ENCODE measurements at regions of chr5 and their contacts with region 1.

Region 1: DNA sequence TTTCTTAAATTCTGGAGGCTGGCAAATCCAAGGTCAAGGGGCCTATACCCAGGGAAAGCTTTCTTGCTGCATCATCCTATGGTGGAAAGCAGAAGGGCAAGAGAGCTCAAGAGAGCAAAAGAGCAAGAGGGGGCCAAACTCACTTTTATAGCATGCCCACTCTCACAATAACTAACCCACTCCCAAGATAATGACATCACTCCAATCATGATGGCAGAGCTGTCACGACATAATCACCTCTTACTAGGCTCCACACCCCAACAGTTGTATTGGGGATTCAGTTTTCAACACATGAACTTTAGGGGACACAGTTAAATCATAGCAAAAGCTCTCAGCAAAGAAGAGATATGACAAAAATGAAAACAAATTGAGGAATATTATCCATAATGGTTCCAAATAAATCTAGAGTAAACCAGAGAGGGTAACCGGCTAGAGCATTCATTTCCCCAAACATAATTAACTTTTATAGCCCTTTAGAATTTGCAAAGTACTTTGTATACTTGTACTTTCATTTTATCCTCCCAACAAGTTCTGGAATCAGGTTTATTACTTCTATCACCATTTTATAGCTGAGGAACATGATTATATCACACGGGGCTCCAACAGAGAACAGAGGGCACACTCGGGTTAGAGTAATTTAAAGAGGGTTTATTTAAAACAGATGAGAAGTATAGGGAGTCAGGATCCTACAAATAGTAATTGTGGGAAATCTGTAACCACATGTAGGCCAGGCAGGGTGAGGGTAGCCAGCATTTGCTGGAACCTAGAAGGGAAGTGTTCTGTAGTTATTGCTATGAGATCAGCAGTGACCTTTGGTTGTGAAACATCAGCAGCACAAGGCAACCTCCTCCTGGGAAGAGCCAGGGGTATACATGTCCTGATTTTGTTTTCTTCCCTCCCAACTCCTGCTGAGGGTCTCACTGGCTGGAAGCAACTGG is 7.2 kb upstream of the TARS1 start:
- DNase-seq: no peak
- H3K4me3 ChIP-seq: no peak overlapping the region
- H3K27ac ChIP-seq: no peak overlapping the region
- H3K4me1 ChIP-seq: no peaks in the 10 kb centered on the region
- H3K27me3 ChIP-seq: no peaks in the 10 kb centered on the region

Region 2: DNA sequence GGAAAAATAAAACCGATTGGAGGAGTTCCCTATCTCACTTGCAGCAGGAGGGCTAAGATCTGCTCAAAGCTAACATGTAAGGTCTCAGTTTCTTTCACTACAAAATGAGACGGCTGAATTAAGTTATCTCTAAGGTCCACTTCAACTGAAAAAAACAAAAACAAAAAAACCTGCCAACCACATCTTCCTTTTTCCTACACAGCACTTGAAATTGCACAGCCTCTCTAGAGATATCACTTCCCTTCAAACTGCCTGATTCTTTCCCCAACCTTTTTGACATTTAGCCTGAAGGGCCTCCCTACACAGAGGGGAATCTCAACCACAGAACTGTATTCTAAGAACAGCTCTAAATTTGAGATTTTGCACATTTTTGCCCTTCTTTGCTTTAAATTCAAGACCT is 220.7 kb before region 1 on chr5:
- CTCF ChIA-PET with region 1: no interaction called
- POLR2A ChIA-PET with region 1: no interaction called
- DNase-seq: peak; percentile 47 to 85 (median 73)
- H3K4me3 ChIP-seq: peak overlapping the region in 2 of 7 experiments; percentile 31 to 45
- H3K27ac ChIP-seq: peak overlapping the region; percentile 62 to 74
- H3K4me1 ChIP-seq: peaks cover 18 to 42% (median 35%) of the 10 kb centered on the region in 4 experiments
- H3K27me3 ChIP-seq: no peaks in the 10 kb centered on the region

Region 3: DNA sequence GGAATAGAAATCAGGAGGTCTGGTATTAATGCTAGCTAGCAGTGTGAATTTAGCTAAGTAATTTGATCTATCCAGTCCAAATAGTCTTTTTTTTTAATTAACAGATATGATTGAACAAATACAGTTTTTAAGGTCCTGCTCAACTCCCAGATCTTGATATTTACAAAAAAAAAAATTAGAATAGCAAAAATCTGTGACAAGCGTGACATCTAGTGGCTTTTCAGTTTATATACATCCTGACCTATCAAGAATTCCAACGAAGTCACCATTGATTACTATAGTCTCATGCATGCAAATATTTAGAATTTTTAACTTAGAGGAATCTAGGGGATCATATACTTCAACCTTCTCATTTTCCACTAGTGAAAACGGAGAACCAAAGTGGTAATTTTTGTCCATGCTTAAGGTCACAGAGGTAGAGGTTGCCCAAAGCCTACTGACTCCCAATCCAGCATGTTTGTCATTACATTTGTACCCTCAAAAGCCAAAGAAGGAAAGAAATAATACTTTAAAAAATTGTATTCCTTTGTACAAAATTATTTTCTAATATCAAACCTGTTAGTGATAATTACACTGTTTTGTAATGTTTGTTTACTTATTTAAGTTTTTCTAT is 10.4 kb before region 1 on chr5:
- CTCF ChIA-PET with region 1: interaction called, 12 read pairs
- POLR2A ChIA-PET with region 1: no interaction called
- DNase-seq: peak; percentile 46 to 66 (median 59)
- H3K4me3 ChIP-seq: no peak overlapping the region
- H3K27ac ChIP-seq: no peak overlapping the region
- H3K4me1 ChIP-seq: peaks cover 0 to 6% (median 2%) of the 10 kb centered on the region in 4 experiments
- H3K27me3 ChIP-seq: no peaks in the 10 kb centered on the region

Measured in common myeloid progenitor, CD34-positive (primary cell).